ENCODE measurements at regions of chr1 and their contacts with region 1.

Region 1: GRCh38 chr1:45521398-45522323 is at the start of gene PRDX1:
- DNase-seq: peak; percentile 96
- H3K4me3 Mint-ChIP-seq: peak within 1 kb of the TSS; percentile 92
- H3K27ac Mint-ChIP-seq: peak within 1 kb of the TSS; percentile 96
- H3K4me1 Mint-ChIP-seq: peaks cover 15% of the 10 kb centered on the region
- H3K27me3 Mint-ChIP-seq: no peaks in the 10 kb centered on the region
- CTCF ChIP-seq: no peak
- total RNA-seq, gene PRDX1: 207 and 242 TPM in 2 replicates

Region 2: GRCh38 chr1:45299981-45300668 is 221.5 kb before region 1 on chr1:
- CTCF ChIA-PET with region 1: no interaction called
- POLR2A ChIA-PET with region 1: no interaction called
- intact Hi-C with region 1: no loop called
- DNase-seq: peak; percentile 81
- H3K4me3 Mint-ChIP-seq: no peak overlapping the region
- H3K27ac Mint-ChIP-seq: no peak overlapping the region
- H3K4me1 Mint-ChIP-seq: peaks cover 5% of the 10 kb centered on the region
- H3K27me3 Mint-ChIP-seq: no peaks in the 10 kb centered on the region
- CTCF ChIP-seq: peak; percentile 71

Region 3: DNA sequence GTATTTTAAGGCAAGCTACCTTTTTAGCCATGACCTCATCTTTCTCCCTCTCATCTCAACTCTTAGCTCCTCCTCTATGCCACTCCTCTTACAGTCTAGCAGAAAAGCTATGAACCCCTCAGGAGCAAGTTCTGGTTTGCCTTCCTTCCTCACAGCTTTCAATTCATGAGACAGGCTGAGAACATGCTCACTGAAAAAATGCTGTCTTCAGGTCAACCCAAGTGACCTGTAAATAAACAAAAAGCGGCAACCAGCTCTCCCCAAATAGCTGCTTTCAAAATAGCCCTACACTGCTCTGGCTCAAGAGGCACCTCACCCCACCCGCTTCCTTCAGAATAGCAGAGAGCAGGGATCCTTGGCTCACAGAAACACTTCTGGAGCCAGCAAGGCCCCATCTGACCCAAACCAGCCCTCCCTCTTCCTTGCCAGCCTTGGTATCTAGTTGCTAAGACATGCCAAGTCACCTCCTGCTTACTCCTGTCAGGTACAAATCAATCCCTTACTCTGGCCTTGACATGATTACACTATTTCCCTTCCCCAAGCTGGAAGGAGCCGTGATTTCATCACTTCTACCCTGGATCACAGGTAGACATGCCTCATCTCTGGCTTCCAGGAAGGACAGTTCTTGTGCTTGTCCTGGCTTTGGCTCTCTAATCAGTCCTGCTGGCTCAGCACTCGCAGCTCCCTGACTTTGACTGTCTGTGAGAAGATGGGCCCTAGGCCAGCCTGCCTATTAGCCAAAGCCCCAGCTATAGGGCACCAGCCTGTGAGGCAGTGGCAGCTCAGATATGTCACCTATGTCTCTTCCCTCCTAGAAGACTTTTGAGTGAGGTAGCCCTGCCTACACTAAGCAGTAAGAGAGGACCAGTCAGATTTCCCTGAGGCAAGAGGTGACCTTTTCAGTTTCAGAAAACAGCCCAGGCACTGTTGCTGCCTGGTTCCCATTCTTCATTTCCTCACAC is 172.7 kb before region 1 on chr1:
- CTCF ChIA-PET with region 1: interaction called, 3 read pairs
- POLR2A ChIA-PET with region 1: interaction called, 21 read pairs
- intact Hi-C with region 1: no loop called
- DNase-seq: peak; percentile 83
- H3K4me3 Mint-ChIP-seq: peak overlapping the region; percentile 28
- H3K27ac Mint-ChIP-seq: peak overlapping the region; percentile 52
- H3K4me1 Mint-ChIP-seq: peaks cover 21% of the 10 kb centered on the region
- H3K27me3 Mint-ChIP-seq: no peaks in the 10 kb centered on the region
- CTCF ChIP-seq: no peak

Region 4: DNA sequence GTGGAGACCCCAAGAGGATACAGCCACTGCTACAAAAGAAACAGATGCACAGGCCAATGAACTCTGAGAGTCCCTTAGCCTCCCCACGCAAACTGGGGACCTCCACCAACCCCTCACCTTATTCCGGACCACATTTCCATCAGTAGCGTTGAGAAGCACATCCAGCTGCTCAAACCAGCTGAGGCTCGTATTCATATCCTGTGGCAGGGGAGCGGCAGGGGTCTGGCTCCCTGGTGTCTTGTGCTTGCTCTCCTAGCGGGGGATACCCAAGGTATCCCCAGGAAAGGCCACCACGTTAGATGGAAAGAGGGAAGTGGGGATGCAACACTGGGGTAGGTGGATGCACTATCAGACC is 22.3 kb before region 1 on chr1:
- CTCF ChIA-PET with region 1: interaction called, 4 read pairs
- POLR2A ChIA-PET with region 1: interaction called, 36 read pairs
- intact Hi-C with region 1: no loop called
- DNase-seq: no peak
- H3K4me3 Mint-ChIP-seq: peak overlapping the region; percentile 97
- H3K27ac Mint-ChIP-seq: peak overlapping the region; percentile 94
- H3K4me1 Mint-ChIP-seq: peaks cover 26% of the 10 kb centered on the region
- H3K27me3 Mint-ChIP-seq: no peaks in the 10 kb centered on the region
- CTCF ChIP-seq: no peak

Region 5: DNA sequence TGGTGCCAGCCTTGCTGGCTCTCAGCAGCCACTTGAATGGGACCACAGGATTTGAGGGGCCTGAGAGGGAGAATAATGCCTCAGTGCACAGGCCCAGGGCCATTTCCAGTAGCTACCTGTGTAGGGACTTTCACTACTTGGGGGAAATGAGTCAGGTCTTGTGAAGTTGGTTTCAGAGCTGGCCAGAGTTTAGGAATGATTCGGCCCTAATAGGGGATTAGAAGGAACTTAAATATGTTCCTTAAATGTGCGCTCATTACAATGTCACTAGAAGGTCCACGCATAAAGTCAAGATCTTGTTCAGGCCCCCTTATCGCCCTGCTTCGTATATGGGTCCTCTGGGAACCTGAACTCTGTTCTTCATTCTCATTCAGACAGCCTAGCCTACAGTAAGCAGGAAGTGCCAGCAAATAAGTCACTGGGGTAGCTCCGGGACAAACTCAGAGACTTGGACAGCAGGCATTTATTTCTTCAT is 23.4 kb after region 1 on chr1:
- CTCF ChIA-PET with region 1: interaction called, 3 read pairs
- POLR2A ChIA-PET with region 1: interaction called, 272 read pairs
- intact Hi-C with region 1: loop called (anchors 1 kb)
- DNase-seq: no peak
- H3K4me3 Mint-ChIP-seq: no peak overlapping the region
- H3K27ac Mint-ChIP-seq: no peak overlapping the region
- H3K4me1 Mint-ChIP-seq: no peaks in the 10 kb centered on the region
- H3K27me3 Mint-ChIP-seq: no peaks in the 10 kb centered on the region
- CTCF ChIP-seq: no peak

Region 6: DNA sequence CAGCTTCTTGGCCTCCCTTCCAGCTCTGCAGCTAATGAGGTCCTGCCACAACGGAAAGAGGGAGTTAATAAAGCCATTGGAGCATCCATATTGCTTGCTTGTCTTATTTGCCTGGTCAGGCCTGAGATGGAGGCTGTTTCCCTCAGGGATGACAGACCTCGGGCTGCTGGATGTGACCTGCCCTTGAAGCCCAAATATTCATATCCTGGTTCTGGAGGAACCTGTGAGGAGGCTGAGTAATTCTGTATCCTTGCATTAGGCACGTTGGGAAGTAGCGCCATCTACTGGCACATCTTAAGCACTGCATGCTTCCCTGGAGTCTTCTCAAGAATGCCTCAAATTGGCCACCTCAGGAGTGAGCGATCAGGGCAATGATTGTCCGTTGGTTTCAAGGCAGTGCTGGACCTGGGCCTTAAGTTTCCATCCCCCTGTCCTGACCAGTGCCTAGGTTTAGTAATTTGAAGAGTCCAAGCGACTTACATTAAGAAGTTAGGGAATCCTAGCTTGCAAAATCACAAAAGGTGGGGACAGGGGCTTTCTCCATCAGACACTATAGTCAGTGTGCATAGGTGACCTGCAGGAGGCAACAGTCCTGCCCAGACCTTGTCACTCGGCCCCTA is 48.4 kb after region 1 on chr1:
- CTCF ChIA-PET with region 1: interaction called, 71 read pairs
- POLR2A ChIA-PET with region 1: interaction called, 50 read pairs
- intact Hi-C with region 1: no loop called
- DNase-seq: peak; percentile 77
- H3K4me3 Mint-ChIP-seq: no peak overlapping the region
- H3K27ac Mint-ChIP-seq: no peak overlapping the region
- H3K4me1 Mint-ChIP-seq: no peaks in the 10 kb centered on the region
- H3K27me3 Mint-ChIP-seq: no peaks in the 10 kb centered on the region
- CTCF ChIP-seq: peak; percentile 97

Region 7: GRCh38 chr1:45589861-45590260 is 68.2 kb after region 1 on chr1:
- CTCF ChIA-PET with region 1: no interaction called
- POLR2A ChIA-PET with region 1: interaction called, 30 read pairs
- intact Hi-C with region 1: no loop called
- DNase-seq: no peak
- H3K4me3 Mint-ChIP-seq: peak overlapping the region; percentile 14
- H3K27ac Mint-ChIP-seq: no peak overlapping the region
- H3K4me1 Mint-ChIP-seq: peaks cover 15% of the 10 kb centered on the region
- H3K27me3 Mint-ChIP-seq: no peaks in the 10 kb centered on the region
- CTCF ChIP-seq: no peak

Region 8: DNA sequence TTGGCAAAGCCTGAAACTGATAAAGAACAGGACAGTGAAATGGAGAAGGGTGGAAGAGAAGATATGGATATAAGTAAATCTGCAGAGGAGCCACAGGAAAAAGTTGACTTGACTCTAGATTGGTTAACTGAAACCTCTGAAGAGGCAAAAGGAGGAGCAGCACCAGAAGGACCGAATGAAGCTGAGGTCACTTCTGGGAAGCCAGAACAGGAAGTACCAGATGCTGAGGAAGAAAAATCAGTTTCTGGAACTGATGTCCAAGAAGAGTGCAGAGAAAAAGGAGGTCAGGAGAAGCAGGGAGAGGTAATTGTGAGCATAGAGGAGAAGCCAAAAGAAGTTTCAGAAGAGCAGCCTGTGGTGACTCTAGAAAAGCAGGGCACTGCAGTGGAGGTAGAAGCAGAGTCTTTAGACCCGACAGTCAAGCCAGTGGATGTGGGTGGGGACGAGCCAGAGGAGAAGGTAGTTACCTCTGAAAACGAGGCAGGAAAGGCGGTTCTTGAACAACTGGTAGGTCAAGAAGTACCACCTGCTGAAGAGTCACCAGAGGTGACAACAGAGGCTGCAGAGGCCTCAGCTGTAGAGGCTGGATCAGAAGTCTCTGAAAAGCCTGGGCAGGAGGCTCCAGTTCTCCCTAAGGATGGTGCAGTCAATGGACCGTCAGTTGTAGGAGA is 85.9 kb after region 1 on chr1:
- CTCF ChIA-PET with region 1: no interaction called
- POLR2A ChIA-PET with region 1: no interaction called
- intact Hi-C with region 1: no loop called
- DNase-seq: no peak
- H3K4me3 Mint-ChIP-seq: no peak overlapping the region
- H3K27ac Mint-ChIP-seq: peak overlapping the region; percentile 26
- H3K4me1 Mint-ChIP-seq: no peaks in the 10 kb centered on the region
- H3K27me3 Mint-ChIP-seq: no peaks in the 10 kb centered on the region
- CTCF ChIP-seq: no peak

Region 9: DNA sequence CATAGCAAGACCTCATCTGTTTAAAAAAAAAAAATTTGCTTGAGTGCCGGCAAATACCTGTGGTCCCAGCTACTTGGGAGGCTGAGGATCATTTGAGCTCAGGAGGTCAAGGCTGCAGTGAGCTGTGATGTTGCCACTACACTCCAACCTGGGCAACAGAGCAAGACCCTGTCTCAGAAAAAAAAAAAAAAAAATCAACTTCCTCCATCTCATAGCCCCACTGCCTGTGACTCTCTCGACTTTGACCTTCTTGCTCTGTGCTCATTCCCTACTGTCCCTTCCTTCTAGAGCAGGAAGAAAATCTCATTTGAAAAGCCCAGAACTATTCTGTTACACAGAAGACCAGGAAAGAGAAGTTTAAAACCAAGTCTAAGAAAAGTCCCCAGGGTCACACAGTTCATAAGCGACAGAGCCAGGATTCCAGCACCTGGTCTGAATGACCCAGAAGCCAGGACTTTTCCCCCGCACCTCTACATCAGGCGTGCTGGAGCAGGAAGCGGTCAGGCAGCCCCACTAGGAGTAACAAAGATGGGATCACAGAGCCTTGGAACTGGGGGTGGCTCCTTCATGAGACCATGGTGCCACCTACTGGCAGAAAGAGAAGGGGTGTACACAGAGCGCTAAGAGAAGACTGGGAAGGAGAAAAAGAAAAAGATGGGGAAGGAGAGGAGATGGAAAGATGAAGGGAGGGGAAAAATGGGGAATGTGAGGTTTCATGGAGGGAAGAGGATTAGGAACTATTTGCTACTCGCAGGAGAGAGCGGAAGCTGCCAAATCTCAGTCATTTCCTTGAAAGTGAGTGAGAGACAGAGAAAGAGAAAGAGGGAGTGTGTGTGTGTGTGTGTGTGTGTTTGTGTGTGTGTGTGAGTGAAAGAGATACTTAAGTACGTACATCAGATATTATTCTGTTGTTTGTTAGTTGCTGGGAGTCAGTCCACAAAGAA is 657.7 kb after region 1 on chr1:
- CTCF ChIA-PET with region 1: no interaction called
- POLR2A ChIA-PET with region 1: interaction called, 13 read pairs
- intact Hi-C with region 1: no loop called
- DNase-seq: peak; percentile 94
- H3K4me3 Mint-ChIP-seq: no peak overlapping the region
- H3K27ac Mint-ChIP-seq: no peak overlapping the region
- H3K4me1 Mint-ChIP-seq: peaks cover 7% of the 10 kb centered on the region
- H3K27me3 Mint-ChIP-seq: no peaks in the 10 kb centered on the region
- CTCF ChIP-seq: peak; percentile 89

Measured in MCF 10A (cell line).